Posterior vena cava (tissue), 2 donors: ENCODE measurements at regions of chr1 and their contacts with region 1.

Region 1: GRCh38 chr1:168767894-168768584 is 39.0 kb upstream of the DPT start:
- DNase-seq: no peak

Region 2: DNA sequence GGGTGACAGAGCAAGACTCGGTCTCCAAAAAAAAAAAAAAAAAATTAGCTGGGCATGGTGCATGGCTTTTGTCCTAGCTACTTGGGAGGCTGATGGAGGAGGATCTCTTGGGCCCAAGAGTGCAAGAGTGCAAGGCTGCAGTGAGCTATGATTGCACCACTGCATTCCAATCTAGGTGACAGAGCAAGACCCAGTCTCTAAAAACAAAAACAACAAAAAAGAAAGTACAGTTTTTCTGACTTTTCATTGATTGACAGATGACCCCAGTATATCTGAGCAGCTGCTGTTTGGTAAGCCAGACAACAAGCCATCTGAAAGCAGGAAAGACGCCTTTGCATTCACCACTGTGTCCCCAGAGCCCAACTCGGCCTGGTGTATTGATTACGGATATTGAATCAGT is 28.1 kb before region 1 on chr1:
- intact Hi-C with region 1: loop called in 1 of 2 experiments (anchors 2 kb)
- DNase-seq: no peak